ENCODE measurements at regions of chr11 and their contacts with region 1.

Region 1: DNA sequence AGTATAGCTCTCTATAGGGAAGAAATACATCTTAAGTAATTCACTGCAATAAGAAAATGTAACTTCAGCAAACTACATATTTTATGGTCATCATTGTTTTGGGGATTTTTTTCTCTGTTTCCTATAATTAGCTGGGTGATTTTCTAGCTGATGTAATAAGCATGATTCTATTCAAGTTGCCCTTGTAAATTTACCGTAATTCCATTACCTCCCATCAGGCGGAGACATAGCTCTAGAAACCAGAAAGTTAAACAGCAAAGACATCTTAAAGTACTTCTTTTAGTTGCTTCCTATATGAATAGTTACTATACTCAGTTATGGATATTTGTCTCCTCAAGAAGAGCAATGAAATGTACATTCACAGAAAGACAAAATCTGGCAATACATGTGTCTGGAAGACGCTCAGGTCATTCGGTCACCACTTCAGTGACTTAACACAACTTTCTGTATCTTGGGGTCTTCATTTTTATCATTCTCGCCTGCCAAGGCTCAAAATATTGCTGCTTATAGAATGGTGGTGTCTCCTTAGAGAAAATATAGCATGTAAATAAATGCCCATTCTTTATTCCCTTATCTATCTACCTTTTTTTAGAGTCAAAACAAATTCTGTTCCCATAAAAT is 239.9 kb upstream of the ZC3H12C start:
- DNase-seq: no peak
- H3K4me3 ChIP-seq: no peak overlapping the region
- H3K27ac ChIP-seq: no peak overlapping the region
- H3K4me1 ChIP-seq: no peaks in the 10 kb centered on the region
- H3K27me3 ChIP-seq: no peaks in the 10 kb centered on the region
- CTCF ChIP-seq: peak in 2 of 3 experiments; percentile 60 to 70; a peak in 2 of 4 replicates
- EP300 ChIP-seq: no peak
- POLR2A ChIP-seq: no peak
- RAD21 ChIP-seq: peak; percentile 85 to 86

Region 2: GRCh38 chr11:109795234-109795633 is 58.0 kb before region 1 on chr11:
- CTCF ChIA-PET with region 1: no interaction called
- POLR2A ChIA-PET with region 1: no interaction called
- DNase-seq: no peak
- H3K4me3 ChIP-seq: no peak overlapping the region
- H3K27ac ChIP-seq: no peak overlapping the region
- H3K4me1 ChIP-seq: no peaks in the 10 kb centered on the region
- H3K27me3 ChIP-seq: no peaks in the 10 kb centered on the region
- CTCF ChIP-seq: no peak
- EP300 ChIP-seq: no peak
- POLR2A ChIP-seq: no peak
- RAD21 ChIP-seq: no peak

Region 3: GRCh38 chr11:109864834-109865547 is 11.7 kb after region 1 on chr11:
- CTCF ChIA-PET with region 1: interaction called, 14 read pairs
- POLR2A ChIA-PET with region 1: no interaction called
- DNase-seq: no peak
- H3K4me3 ChIP-seq: no peak overlapping the region
- H3K27ac ChIP-seq: no peak overlapping the region
- H3K4me1 ChIP-seq: no peaks in the 10 kb centered on the region
- H3K27me3 ChIP-seq: no peaks in the 10 kb centered on the region
- CTCF ChIP-seq: no peak
- EP300 ChIP-seq: no peak
- POLR2A ChIP-seq: no peak
- RAD21 ChIP-seq: no peak

Region 4: GRCh38 chr11:109877043-109877442 is 23.8 kb after region 1 on chr11:
- CTCF ChIA-PET with region 1: no interaction called
- POLR2A ChIA-PET with region 1: no interaction called
- DNase-seq: no peak
- H3K4me3 ChIP-seq: no peak overlapping the region
- H3K27ac ChIP-seq: no peak overlapping the region
- H3K4me1 ChIP-seq: no peaks in the 10 kb centered on the region
- H3K27me3 ChIP-seq: no peaks in the 10 kb centered on the region
- CTCF ChIP-seq: no peak
- EP300 ChIP-seq: no peak
- POLR2A ChIP-seq: no peak
- RAD21 ChIP-seq: no peak

Region 5: GRCh38 chr11:109939166-109939810 is 86.0 kb after region 1 on chr11:
- CTCF ChIA-PET with region 1: interaction called, 49 read pairs
- POLR2A ChIA-PET with region 1: no interaction called
- DNase-seq: no peak
- H3K4me3 ChIP-seq: no peak overlapping the region
- H3K27ac ChIP-seq: no peak overlapping the region
- H3K4me1 ChIP-seq: no peaks in the 10 kb centered on the region
- H3K27me3 ChIP-seq: no peaks in the 10 kb centered on the region
- CTCF ChIP-seq: peak in 2 of 3 experiments; percentile 70 to 75; a peak in 3 of 4 replicates
- EP300 ChIP-seq: no peak
- POLR2A ChIP-seq: no peak
- RAD21 ChIP-seq: peak; percentile 91 to 94

Measured in H1 (cell line).